ENCODE measurements at regions of chr2 and their contacts with region 1.

Region 1: GRCh38 chr2:237955640-237956401 is 11.0 kb upstream of the UBE2F start:
- DNase-seq: no peak

Region 2: GRCh38 chr2:237603718-237604362 is 352.0 kb before region 1 on chr2:
- intact Hi-C with region 1: no loop called
- DNase-seq: peak in 11 of 42 donors; percentile 20 to 56 (median 35)

Region 3: DNA sequence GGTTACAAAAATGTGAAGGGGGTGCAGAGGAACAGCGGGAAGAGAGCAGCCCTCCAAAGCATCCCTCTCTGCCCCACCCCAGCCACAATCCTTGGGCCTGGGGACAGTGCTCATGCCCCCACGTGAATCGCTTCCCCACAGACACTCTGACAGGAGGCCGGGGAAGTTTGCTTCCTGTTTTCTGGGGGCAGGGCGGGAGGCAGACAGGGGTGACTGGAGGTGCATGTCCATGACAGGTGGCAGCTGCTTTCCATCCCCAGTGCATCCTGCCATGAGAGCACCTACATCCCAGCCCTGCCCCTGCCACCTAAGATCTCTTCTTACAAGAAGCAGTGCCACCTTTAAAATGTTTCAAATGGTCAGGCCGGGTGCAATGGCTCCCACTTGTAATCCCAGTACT is 36.2 kb before region 1 on chr2:
- intact Hi-C with region 1: loop called (anchors 5 kb)
- DNase-seq: peak in 4 of 42 donors; percentile 26 to 54 (median 36)